H1 (cell line): ENCODE measurements at regions of chr22 and their contacts with region 1.

Region 1: DNA sequence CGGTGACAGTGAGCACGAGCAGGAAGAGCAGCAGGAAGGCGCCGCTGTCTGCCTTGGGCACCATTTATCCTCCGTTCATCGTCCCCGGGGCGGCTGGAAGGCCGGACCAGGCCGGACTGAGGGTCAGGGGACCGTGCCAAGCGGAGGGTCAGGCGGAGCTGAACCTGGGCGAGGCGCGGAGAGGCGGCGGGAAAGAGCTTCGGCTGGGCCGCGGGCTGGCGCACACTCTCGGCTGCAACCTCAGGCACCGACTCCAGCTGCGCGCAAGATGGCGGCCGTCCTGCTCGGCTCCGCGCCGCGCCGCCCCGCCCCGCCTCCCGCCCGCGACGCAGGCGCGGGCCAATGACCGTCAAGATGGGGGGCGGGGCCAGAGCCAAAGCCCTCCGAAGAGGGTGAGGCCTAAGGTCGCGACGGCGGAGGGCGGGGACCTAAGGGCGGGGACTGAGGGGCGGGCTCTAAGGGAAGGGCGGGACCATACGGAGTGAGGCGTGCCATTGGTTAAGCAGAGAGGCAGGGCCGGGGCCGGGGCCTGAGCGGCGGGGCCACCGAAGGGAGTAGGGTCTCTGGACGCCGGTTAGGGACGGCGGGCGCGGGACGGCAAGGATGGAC is at the start of gene DGCR2:
- DNase-seq: peak; percentile 91 to 97
- H3K4me3 ChIP-seq: peak within 1 kb of the TSS; percentile 85 to 98 (median 92)
- H3K27ac ChIP-seq: peak within 1 kb of the TSS; percentile 93
- H3K4me1 ChIP-seq: peaks cover 0 to 9% (median 6%) of the 10 kb centered on the region in 4 experiments; a peak in 5 of 7 replicates
- H3K27me3 ChIP-seq: no peaks in the 10 kb centered on the region
- CTCF ChIP-seq: no peak
- EP300 ChIP-seq: no peak
- POLR2A ChIP-seq: peak in 1 of 2 experiments; percentile 42; a peak in 1 of 3 replicates
- RAD21 ChIP-seq: no peak
- total RNA-seq, gene DGCR2: 62.2 and 65.5 TPM in 2 replicates

Region 2: DNA sequence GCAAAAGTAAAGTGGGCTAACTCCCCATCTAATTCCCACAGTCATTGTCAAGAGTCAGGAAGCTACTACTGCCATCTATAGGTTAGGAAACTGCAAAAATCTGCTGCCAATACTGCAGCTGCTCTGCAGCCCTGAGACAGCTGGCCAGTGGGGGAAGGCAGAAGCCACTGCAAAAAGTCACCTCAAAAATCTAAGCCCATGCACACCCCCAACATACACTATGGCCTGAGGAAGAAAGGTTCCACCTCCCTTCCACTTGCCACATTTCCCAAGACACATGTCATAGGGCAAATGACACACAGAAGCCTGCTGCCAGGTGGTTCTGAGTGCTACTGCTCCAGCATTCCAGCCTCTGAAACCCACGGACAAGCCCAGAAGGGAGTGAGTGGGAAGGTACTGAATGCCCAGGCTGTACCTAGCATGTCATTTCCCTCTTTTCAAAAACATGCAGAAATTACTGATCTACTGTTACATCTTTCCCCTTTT is 37.0 kb before region 1 on chr22:
- CTCF ChIA-PET with region 1: no interaction called
- POLR2A ChIA-PET with region 1: no interaction called
- DNase-seq: no peak
- H3K4me3 ChIP-seq: no peak overlapping the region
- H3K27ac ChIP-seq: no peak overlapping the region
- H3K4me1 ChIP-seq: peaks cover 0 to 3% (median 0%) of the 10 kb centered on the region in 4 experiments; a peak in 1 of 7 replicates
- H3K27me3 ChIP-seq: no peaks in the 10 kb centered on the region
- CTCF ChIP-seq: peak in 2 of 3 experiments; percentile 50 to 53; a peak in 3 of 4 replicates
- EP300 ChIP-seq: no peak
- POLR2A ChIP-seq: no peak
- RAD21 ChIP-seq: peak; percentile 15 to 36; a peak in 2 of 4 replicates

Region 3: DNA sequence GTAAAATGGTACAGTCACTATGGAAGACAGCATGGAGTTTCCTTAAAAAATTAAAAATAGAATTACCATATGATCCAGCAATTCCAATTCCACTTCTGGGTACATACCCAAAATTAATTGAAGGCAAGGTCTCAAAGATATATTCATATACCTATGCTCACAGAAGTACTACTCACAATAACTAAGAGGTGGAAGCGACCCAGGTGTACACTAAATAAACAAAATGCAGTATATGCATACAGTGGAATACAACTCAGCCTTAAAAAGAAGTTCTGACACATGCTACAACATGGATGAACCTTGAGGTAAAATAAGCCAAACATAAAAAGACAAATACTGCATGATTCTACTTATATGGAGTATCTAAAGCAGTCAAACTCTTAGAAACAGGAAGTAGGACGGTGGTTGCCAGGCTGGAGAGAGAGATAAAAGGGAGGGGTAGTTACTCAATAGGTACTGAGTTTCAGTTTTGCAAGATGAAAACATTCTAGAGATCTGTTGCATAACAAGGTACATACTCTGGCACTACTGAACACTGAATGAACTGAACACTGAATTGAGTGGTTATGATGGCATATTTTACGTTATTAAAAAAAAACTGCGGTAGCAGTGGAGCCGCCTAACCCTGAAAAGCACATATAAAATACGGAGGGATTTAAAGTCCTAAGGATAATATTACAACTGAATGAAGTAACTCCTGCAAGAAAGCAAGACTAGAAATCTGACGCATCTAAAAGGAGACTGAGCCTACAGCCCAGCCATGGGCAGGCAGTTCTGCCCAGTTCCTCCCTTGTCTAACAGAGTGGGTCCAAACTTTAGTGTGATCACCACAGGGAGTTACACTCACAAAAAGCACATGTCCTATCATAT is 12.8 kb before region 1 on chr22:
- CTCF ChIA-PET with region 1: interaction called, 11 read pairs
- POLR2A ChIA-PET with region 1: interaction called, 21 read pairs
- DNase-seq: no peak
- H3K4me3 ChIP-seq: no peak overlapping the region
- H3K27ac ChIP-seq: no peak overlapping the region
- H3K4me1 ChIP-seq: peaks cover 7 to 14% (median 11%) of the 10 kb centered on the region in 4 experiments
- H3K27me3 ChIP-seq: no peaks in the 10 kb centered on the region; a peak in 1 of 7 replicates
- CTCF ChIP-seq: no peak
- EP300 ChIP-seq: no peak
- POLR2A ChIP-seq: no peak
- RAD21 ChIP-seq: no peak

Region 4: DNA sequence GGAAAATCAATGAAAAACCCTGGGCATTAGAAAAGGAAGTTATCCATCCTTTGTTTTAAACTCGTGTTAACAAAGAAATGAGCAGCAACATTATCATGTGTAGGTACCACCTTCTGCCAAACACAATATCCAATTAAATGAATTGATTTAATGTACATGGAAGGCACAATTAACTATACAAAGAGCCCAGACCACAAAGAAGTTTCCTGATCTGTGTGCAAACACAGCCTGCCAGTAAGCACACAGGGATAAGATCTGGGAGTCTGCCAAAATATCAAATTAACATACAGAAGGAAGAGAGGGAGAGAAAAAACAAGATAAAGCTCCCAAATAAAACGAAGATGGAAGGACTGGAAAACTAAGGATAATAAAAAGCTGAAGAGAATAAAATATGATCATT is 110.4 kb after region 1 on chr22:
- CTCF ChIA-PET with region 1: no interaction called
- POLR2A ChIA-PET with region 1: no interaction called
- DNase-seq: no peak
- H3K4me3 ChIP-seq: no peak overlapping the region
- H3K27ac ChIP-seq: no peak overlapping the region
- H3K4me1 ChIP-seq: no peaks in the 10 kb centered on the region
- H3K27me3 ChIP-seq: no peaks in the 10 kb centered on the region
- CTCF ChIP-seq: no peak
- EP300 ChIP-seq: no peak
- POLR2A ChIP-seq: no peak
- RAD21 ChIP-seq: no peak